Mammary epithelial cell (primary cell): ENCODE measurements at regions of chr22 and their contacts with region 1.

Region 1: GRCh38 chr22:41832553-41833368 is at the start of gene SREBF2:
- DNase-seq: peak; percentile 100
- H3K4me3 ChIP-seq: peak within 1 kb of the TSS; percentile 66 to 92 (median 75)
- H3K27ac ChIP-seq: peak within 1 kb of the TSS; percentile 82
- H3K4me1 ChIP-seq: peaks cover 30% of the 10 kb centered on the region
- H3K27me3 ChIP-seq: no peaks in the 10 kb centered on the region
- CTCF ChIP-seq: no peak
- total RNA-seq, gene SREBF2: 100 to 131 TPM

Region 2: GRCh38 chr22:42079319-42080251 is 246.8 kb after region 1 on chr22 and contains the start of gene SMDT1:
- CTCF ChIA-PET with region 1: no interaction called
- dilution Hi-C with region 1: no loop called
- in situ Hi-C with region 1: no loop called
- intact Hi-C with region 1: loop called (anchors 10 kb)
- DNase-seq: peak; percentile 97
- H3K4me3 ChIP-seq: peak within 1 kb of the TSS; percentile 68 to 92 (median 76)
- H3K27ac ChIP-seq: peak within 1 kb of the TSS; percentile 85
- H3K4me1 ChIP-seq: peaks cover 16% of the 10 kb centered on the region
- H3K27me3 ChIP-seq: no peaks in the 10 kb centered on the region
- CTCF ChIP-seq: no peak
- total RNA-seq, gene SMDT1: 2.7 to 47.1 TPM